HEK293 (cell line): ENCODE measurements at regions of chr1 and their contacts with region 1.

Region 1: GRCh38 chr1:26363549-26364448 is 8.8 kb downstream of the ZNF683 start:
- H3K4me3 ChIP-seq: no peak overlapping the region
- H3K27ac ChIP-seq: no peak overlapping the region
- H3K4me1 ChIP-seq: no peaks in the 10 kb centered on the region
- CTCF ChIP-seq: peak; percentile 79

Region 2: DNA sequence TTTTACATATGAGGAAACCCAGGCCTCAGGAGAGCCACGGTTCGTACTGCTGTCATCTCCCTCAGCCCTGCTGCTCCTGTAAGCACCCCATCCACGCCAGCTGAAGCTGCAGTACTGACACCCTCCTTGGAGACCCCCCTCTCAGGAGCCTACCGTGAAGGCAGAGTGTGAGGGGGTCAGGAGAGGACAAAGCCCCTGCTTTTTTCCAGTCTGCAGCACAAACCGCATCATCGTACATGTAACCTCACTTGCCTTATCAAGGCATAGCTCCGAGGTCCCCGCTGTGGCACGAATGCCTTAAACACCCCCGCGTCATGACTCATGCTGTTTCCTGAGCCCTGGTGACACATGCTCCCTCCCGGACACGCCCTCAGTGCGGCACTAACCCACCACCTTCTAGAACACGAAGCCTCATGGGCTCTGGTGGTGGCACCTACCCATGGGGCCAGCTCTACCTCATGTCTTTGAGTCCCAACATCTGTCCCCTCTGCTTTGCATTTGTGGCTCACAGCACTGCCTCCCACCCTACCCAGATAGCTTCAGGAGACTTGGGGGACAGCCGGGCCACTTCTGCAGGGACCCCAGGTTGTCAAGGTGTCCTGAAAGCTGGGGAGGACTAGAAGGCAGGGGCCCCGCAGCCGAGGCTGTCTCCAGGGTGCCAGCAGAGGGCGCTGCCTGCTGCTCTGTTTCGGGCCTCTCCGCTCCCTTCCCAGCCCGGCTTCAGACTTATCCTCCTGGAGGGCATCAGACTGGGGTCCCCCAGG is 79.0 kb before region 1 on chr1:
- CTCF ChIA-PET with region 1: interaction called, 28 read pairs
- POLR2A ChIA-PET with region 1: no interaction called
- H3K4me3 ChIP-seq: no peak overlapping the region
- H3K27ac ChIP-seq: no peak overlapping the region
- H3K4me1 ChIP-seq: no peaks in the 10 kb centered on the region
- CTCF ChIP-seq: peak; percentile 70

Region 3: DNA sequence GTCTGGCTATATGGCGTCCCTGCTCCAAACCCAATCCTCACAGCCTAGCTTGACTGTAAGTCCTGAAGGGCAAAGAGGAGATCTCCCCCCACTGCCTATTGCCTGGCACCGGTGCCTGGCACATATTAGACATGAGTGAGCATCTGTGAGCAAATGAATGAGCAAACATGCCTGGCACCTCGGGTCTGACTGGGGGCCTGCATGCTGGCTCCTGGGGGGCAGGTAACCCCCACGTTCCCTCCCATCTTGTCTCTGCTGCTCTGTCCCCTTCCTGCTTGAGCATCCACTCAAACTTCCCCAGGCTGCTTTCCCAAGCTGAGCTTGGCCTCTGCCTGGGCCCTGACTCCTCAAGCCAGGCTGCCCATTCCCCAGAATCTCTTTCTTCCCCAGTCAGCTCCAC is 21.9 kb before region 1 on chr1:
- CTCF ChIA-PET with region 1: interaction called, 13 read pairs
- POLR2A ChIA-PET with region 1: interaction called, 5 read pairs
- H3K4me3 ChIP-seq: no peak overlapping the region
- H3K27ac ChIP-seq: no peak overlapping the region
- H3K4me1 ChIP-seq: no peaks in the 10 kb centered on the region
- CTCF ChIP-seq: no peak

Region 4: DNA sequence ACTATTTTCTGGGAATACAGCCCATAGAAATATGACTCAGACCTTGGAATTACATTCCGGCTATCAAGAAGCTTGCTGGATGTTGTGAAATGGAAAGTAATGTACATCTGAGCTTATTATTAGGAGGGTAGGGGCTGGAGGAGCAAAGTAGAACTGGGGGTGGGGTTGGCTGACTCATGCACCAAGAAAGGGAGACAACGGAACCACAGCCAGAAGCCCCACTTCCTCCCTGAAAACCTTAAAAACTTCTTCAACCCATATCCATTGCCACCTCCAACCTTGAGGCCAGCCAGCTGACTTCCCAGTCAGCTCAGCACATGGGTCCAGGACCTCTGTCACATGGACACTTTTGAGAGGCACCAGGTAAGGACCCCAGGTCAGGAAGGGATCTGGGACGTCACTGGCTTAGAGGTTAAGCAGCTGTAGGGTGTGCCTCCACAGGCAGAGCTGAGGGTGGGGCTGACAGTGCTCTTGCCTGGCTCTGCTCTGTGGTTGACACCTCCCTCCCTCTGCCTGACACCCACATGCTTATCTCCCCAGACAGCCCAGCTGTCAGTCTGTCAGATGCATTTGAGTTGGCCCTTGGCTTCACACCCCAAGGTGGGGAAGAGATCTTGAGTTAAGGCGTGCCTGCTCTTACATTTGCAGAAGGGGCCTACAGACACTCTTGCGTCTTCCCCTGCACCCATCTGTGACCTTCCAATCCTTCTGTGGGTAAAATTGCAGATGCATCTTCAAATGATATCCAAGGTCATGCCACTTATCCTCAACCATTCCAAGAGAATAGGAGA is 14.5 kb after region 1 on chr1:
- CTCF ChIA-PET with region 1: interaction called, 81 read pairs
- POLR2A ChIA-PET with region 1: no interaction called
- H3K4me3 ChIP-seq: no peak overlapping the region
- H3K27ac ChIP-seq: no peak overlapping the region
- H3K4me1 ChIP-seq: no peaks in the 10 kb centered on the region
- CTCF ChIP-seq: no peak

Region 5: DNA sequence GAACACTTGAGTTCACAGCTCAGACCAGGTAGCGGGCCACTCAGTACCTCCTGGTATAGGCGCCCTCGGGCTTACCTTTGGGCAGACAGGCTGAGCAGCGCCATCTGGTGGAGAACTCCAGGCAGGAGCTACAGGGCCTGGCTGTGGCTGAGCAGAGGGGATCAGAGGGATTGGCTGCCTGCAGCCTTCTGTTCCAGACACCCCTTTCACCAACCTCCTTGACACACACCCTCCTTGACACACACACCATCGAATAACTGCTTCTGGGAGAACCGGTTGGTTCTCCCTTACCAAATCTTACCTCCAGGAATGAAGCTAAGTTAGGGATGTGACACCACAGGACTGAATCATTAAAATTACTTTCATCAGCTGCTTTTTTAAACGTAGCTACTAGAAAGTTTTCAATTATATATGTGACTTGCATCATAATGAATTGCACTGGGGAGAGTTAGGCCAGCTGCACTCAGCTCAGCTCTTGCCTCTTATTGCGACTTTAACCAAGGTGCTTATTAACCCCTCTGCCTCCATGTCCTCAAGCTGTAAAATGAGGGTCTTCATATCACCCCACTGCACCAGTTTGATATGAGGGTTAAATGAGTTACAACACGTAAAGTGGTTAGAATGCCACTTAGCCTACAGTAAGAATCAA is 53.4 kb after region 1 on chr1:
- CTCF ChIA-PET with region 1: interaction called, 25 read pairs
- POLR2A ChIA-PET with region 1: no interaction called
- H3K4me3 ChIP-seq: no peak overlapping the region
- H3K27ac ChIP-seq: no peak overlapping the region
- H3K4me1 ChIP-seq: no peaks in the 10 kb centered on the region
- CTCF ChIP-seq: peak; percentile 70